H1 (cell line): ENCODE measurements at regions of chr6 and their contacts with region 1.

Region 1: DNA sequence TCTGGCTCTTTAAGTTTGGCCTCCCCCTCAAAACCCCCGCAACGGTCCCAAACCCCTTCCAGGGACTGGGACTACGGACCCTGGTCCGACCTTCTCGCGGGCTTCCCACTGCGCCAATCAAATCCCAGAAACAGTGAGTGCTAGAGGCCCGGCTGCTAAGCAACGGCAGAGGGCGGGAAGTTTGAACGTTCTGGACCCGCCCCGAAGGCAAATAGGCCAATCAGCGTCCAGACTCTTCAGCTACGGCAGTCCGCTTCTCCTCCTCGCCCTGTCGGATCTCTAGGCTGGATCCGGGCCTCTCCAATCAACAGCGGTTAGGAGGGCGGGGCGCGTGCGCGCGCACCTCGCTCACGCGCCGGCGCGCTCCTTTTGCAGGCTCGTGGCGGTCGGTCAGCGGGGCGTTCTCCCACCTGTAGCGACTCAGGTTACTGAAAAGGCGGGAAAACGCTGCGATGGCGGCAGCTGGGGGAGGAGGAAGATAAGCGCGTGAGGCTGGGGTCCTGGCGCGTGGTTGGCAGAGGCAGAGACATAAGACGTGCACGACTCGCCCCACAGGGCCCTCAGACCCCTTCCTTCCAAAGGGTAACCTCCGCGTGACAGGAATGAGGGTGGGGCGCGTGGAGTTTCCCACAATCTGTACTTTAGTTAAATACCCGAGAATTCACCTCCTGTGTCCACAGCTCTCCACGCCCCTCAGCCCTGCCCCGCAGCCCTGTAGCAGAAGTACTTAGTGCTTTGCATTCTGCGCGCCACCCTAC is at the start of gene MSH5:
- DNase-seq: peak; percentile 98 to 99
- H3K4me3 ChIP-seq: peak within 1 kb of the TSS; percentile 36 to 65 (median 47)
- H3K27ac ChIP-seq: peak within 1 kb of the TSS; percentile 92
- H3K4me1 ChIP-seq: peaks cover 16 to 22% (median 21%) of the 10 kb centered on the region in 4 experiments
- H3K27me3 ChIP-seq: no peaks in the 10 kb centered on the region
- CTCF ChIP-seq: no peak
- EP300 ChIP-seq: peak in 1 of 2 experiments; percentile 35; a peak in 1 of 3 replicates
- POLR2A ChIP-seq: peak in 1 of 2 experiments; percentile 90; a peak in 2 of 3 replicates
- RAD21 ChIP-seq: no peak
- total RNA-seq, gene MSH5: 21.3 and 25.3 TPM in 2 replicates

Region 2: DNA sequence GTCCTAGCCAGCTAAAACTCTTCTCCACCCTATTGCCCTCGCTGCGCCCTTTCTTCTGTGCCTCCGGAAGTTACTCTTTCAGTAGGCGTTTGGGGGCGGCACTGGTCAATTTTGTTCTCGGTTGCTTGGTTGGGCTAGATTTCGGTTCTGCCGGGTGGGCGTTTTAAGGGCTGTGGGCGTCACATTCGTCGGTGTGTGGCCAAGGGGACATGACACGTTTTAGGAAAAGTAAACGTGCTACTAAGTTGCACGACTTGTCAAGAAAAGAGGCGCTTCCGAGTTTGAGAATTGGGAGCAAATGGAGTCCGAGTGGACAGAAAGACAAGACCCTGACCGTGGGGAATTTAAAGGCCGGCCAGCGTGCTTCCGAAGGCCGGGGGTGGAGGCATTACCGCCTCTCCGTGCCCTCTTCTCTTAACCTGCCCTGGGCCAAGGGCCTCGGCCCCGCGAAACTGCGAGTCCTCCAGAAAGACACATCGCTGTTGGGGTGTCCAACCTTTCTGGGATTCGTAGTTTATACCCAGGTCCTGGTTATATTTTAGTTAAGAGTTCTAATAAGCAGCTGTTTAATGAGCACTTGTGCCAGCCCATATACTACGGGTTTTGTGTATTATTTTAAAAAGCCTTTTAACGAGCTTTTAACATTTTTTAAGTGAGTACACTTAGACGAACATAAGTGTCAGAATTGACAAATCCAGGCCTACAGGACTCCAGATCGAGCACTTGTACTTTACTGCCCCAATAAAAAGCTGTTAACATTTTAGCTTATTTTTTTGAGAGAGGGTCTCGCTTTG is 86.7 kb before region 1 on chr6:
- CTCF ChIA-PET with region 1: interaction called, 6 read pairs
- POLR2A ChIA-PET with region 1: interaction called, 12 read pairs
- DNase-seq: peak in 1 of 2 experiments; percentile 76
- H3K4me3 ChIP-seq: peak overlapping the region; percentile 82 to 94 (median 92)
- H3K27ac ChIP-seq: peak overlapping the region; percentile 99
- H3K4me1 ChIP-seq: peaks cover 0 to 5% (median under 1%) of the 10 kb centered on the region in 4 experiments; a peak in 2 of 7 replicates
- H3K27me3 ChIP-seq: no peaks in the 10 kb centered on the region
- CTCF ChIP-seq: peak in 1 of 3 experiments; percentile 18; a peak in 1 of 4 replicates
- EP300 ChIP-seq: no peak
- POLR2A ChIP-seq: peak in 1 of 2 experiments; percentile 79; a peak in 2 of 3 replicates
- RAD21 ChIP-seq: peak in 1 of 2 experiments; percentile 21; a peak in 2 of 4 replicates

Region 3: DNA sequence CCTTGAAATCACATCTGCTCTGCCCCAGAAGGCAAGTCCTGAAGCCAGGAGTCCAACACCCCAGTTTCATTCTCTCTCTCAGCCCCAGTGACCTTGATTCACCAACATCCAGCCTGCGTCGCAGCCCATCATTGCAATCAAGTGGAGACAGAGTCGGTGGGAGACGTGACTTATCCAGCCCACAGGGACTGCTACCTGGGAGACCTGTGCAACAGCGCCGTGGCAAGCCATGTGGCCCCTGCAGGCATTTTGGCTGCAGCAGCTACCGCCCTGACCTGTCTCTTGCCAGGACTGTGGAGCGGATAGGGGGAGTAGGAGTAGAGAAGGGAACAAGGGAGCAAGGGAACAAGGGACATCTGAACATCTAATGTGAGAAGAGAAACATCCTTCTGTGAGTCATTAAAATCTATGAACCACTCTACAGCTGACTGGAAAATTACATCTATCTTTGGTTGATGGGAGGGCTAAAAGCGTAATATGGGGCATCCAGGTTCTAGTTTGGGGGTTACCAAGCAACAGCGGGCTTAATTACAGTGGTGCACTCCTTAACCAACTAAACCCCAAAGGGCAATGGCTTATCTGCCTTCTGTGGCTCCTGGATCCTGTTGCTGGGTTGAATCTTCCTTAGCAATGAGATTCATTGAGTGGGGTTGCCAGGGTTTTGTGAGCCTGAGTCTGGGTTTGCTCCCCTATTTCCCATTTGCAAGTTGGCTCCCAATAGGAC is 22.2 kb before region 1 on chr6:
- CTCF ChIA-PET with region 1: interaction called, 7 read pairs
- POLR2A ChIA-PET with region 1: interaction called, 73 read pairs
- DNase-seq: no peak
- H3K4me3 ChIP-seq: 0 out of 8 replicates have a peak overlapping the region, but pooled peaks of 1 of the 4 experiments have one; percentile 9
- H3K27ac ChIP-seq: no peak overlapping the region
- H3K4me1 ChIP-seq: peaks cover 11 to 29% (median 27%) of the 10 kb centered on the region in 4 experiments
- H3K27me3 ChIP-seq: no peaks in the 10 kb centered on the region; a peak in 1 of 7 replicates
- CTCF ChIP-seq: peak; percentile 52 to 74 (median 72); a peak in 3 of 4 replicates
- EP300 ChIP-seq: no peak
- POLR2A ChIP-seq: no peak
- RAD21 ChIP-seq: peak; percentile 50 to 56; a peak in 3 of 4 replicates

Region 4: DNA sequence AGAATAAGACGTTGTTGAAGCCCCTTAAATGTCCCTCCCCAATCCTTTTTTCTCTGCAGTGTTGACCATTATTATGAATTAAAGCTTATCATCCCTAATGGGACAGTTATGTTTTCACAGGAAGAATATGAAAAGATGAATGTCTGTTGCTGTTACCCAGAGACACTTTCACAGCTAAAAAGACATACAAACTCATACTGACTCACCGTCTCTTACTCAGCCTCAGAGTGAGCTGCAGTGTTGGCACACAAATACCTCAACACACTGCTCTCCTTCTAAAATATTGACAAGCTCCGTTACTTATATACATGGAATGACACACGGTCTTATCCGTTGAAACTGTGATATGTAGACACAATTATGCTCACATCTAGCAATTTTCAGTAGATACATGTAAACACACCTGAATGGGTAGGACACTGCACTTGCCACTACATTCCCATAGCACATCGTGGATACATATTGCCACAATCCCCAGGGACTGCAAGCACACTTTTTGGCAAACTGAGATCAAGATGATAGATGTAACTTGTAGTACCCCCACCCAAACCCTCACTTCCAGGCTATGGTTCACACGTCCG is 13.0 kb after region 1 on chr6:
- CTCF ChIA-PET with region 1: interaction called, 4 read pairs
- POLR2A ChIA-PET with region 1: interaction called, 38 read pairs
- DNase-seq: no peak
- H3K4me3 ChIP-seq: no peak overlapping the region
- H3K27ac ChIP-seq: no peak overlapping the region
- H3K4me1 ChIP-seq: no peaks in the 10 kb centered on the region
- H3K27me3 ChIP-seq: no peaks in the 10 kb centered on the region
- CTCF ChIP-seq: no peak
- EP300 ChIP-seq: no peak
- POLR2A ChIP-seq: no peak
- RAD21 ChIP-seq: no peak

Region 5: GRCh38 chr6:31776989-31777666 is 37.3 kb after region 1 on chr6 and contains the start of gene VWA7:
- CTCF ChIA-PET with region 1: interaction called, 3 read pairs
- POLR2A ChIA-PET with region 1: interaction called, 13 read pairs
- DNase-seq: peak in 1 of 2 experiments; percentile 63
- H3K4me3 ChIP-seq: no peak within 1 kb of the TSS
- H3K27ac ChIP-seq: peak within 1 kb of the TSS; percentile 26; the same call in 1 of the 2 replicates
- H3K4me1 ChIP-seq: peaks cover 0 to 7% (median 3%) of the 10 kb centered on the region in 4 experiments; a peak in 4 of 7 replicates
- H3K27me3 ChIP-seq: no peaks in the 10 kb centered on the region; a peak in 1 of 7 replicates
- CTCF ChIP-seq: no peak
- EP300 ChIP-seq: no peak
- POLR2A ChIP-seq: 0 out of 3 replicates have a peak, but pooled peaks of 1 of the 2 experiments have one; percentile 19
- RAD21 ChIP-seq: no peak
- total RNA-seq, gene VWA7: 1.5 and 2.1 TPM in 2 replicates

Region 6: GRCh38 chr6:31834434-31835198 is 94.8 kb after region 1 on chr6:
- CTCF ChIA-PET with region 1: interaction called, 13 read pairs
- POLR2A ChIA-PET with region 1: interaction called, 17 read pairs
- DNase-seq: peak in 1 of 2 experiments; percentile 89
- H3K4me3 ChIP-seq: peak overlapping the region; percentile 70 to 99 (median 92)
- H3K27ac ChIP-seq: peak overlapping the region; percentile 96
- H3K4me1 ChIP-seq: peaks cover 2 to 9% (median 6%) of the 10 kb centered on the region in 4 experiments; a peak in 5 of 7 replicates
- H3K27me3 ChIP-seq: no peaks in the 10 kb centered on the region
- CTCF ChIP-seq: no peak
- EP300 ChIP-seq: no peak; a peak in 1 of 3 replicates
- POLR2A ChIP-seq: peak; percentile 98 to 99
- RAD21 ChIP-seq: no peak